Heart left ventricle (tissue), 16 donors: ENCODE measurements at regions of chr15 and their contacts with region 1.

Region 1: DNA sequence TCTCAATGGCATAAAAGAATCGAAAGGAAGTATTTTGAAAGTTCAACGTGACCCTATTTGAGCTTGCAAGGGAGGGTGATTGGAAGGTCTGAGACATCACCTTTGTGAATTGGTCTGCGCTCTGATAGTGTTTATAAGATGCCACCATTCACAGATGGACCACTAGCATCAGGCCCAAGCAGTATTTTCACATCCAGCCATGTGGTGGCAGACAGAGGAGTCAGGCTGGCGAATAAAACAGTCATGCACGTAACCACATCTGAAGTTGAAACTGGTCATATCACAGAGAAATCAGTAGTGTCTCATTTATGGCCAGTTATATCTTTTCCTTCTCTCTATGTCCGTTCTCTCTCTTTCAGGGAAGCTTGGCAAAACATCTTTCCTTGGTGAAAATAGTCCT is 170.1 kb upstream of the ONECUT1 start:
- DNase-seq: no peak
- ATAC-seq: no peak
- H3K4me3 ChIP-seq: no peak overlapping the region
- H3K27ac ChIP-seq: no peak overlapping the region
- H3K4me1 ChIP-seq: no peaks in the 10 kb centered on the region
- H3K27me3 ChIP-seq: peaks cover 0 to 3% (median 0%) of the 10 kb centered on the region in 9 donors
- CTCF ChIP-seq: no peak
- POLR2A ChIP-seq: no peak

Region 2: GRCh38 chr15:53046153-53046790 is 86.0 kb after region 1 on chr15:
- intact Hi-C with region 1: loop called in 1 of 10 experiments (anchors 10 kb)
- DNase-seq: no peak
- ATAC-seq: no peak
- H3K4me3 ChIP-seq: no peak overlapping the region
- H3K27ac ChIP-seq: no peak overlapping the region
- H3K4me1 ChIP-seq: no peaks in the 10 kb centered on the region
- H3K27me3 ChIP-seq: no peaks in the 10 kb centered on the region
- CTCF ChIP-seq: no peak
- POLR2A ChIP-seq: no peak

Region 3: GRCh38 chr15:53114960-53115359 is 154.7 kb after region 1 on chr15:
- intact Hi-C with region 1: no loop called
- DNase-seq: no peak
- ATAC-seq: no peak
- H3K4me3 ChIP-seq: no peak overlapping the region
- H3K27ac ChIP-seq: no peak overlapping the region
- H3K4me1 ChIP-seq: no peaks in the 10 kb centered on the region
- H3K27me3 ChIP-seq: peaks cover 0 to 3% (median 0%) of the 10 kb centered on the region in 9 donors
- CTCF ChIP-seq: no peak
- POLR2A ChIP-seq: no peak